SK-N-SH (cell line): ENCODE measurements at regions of chr12 and their contacts with region 1.

Region 1: DNA sequence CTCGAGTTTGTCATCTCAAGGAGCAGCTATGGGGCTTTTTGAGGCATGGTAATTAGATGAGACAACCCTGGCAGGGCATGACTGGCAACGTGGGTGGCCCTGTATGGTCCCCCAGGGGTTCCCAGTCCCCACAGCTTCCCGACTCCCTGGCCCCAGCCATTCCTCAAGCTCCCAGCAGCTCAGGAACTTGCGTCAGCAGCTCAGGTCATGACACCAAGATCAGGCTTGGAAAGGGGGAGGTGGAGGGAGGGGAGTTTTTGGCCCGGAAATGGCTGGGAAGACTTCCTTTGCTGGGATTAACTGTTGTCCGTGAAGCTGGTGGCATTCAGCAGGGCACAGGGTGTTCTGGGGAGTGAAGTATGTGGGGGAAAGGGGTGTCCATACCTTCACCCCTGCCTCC is 10.4 kb upstream of the NRIP2 start:
- DNase-seq: no peak
- H3K4me3 ChIP-seq: no peak overlapping the region
- H3K27ac ChIP-seq: no peak overlapping the region
- H3K4me1 ChIP-seq: peaks cover 0 to 6% of the 10 kb centered on the region in 2 experiments; a peak in 1 of 4 replicates
- H3K27me3 ChIP-seq: no peaks in the 10 kb centered on the region
- CTCF ChIP-seq: no peak
- EP300 ChIP-seq: no peak
- RAD21 ChIP-seq: no peak

Region 2: GRCh38 chr12:2834581-2835491 is 10.4 kb before region 1 on chr12 and contains the start of gene NRIP2:
- CTCF ChIA-PET with region 1: interaction called, 10 read pairs
- POLR2A ChIA-PET with region 1: no interaction called
- DNase-seq: peak; percentile 90
- H3K4me3 ChIP-seq: no peak within 1 kb of the TSS; a peak in 1 of 4 replicates
- H3K27ac ChIP-seq: no peak within 1 kb of the TSS
- H3K4me1 ChIP-seq: peaks cover 4 to 15% of the 10 kb centered on the region in 2 experiments; a peak in 3 of 4 replicates
- H3K27me3 ChIP-seq: no peaks in the 10 kb centered on the region
- CTCF ChIP-seq: no peak
- EP300 ChIP-seq: no peak
- RAD21 ChIP-seq: peak; percentile 26; the same call in 1 of the 2 replicates
- polyA plus RNA-seq, gene NRIP2: not detected in 2 replicates

Region 3: GRCh38 chr12:3014641-3015040 is 169.4 kb after region 1 on chr12:
- CTCF ChIA-PET with region 1: no interaction called
- POLR2A ChIA-PET with region 1: no interaction called
- DNase-seq: no peak
- H3K4me3 ChIP-seq: no peak overlapping the region
- H3K27ac ChIP-seq: no peak overlapping the region
- H3K4me1 ChIP-seq: no peaks in the 10 kb centered on the region
- H3K27me3 ChIP-seq: no peaks in the 10 kb centered on the region
- CTCF ChIP-seq: no peak
- EP300 ChIP-seq: no peak
- RAD21 ChIP-seq: no peak